PC-9 (cell line): ENCODE measurements at regions of chr12 and their contacts with region 1.

Region 1: DNA sequence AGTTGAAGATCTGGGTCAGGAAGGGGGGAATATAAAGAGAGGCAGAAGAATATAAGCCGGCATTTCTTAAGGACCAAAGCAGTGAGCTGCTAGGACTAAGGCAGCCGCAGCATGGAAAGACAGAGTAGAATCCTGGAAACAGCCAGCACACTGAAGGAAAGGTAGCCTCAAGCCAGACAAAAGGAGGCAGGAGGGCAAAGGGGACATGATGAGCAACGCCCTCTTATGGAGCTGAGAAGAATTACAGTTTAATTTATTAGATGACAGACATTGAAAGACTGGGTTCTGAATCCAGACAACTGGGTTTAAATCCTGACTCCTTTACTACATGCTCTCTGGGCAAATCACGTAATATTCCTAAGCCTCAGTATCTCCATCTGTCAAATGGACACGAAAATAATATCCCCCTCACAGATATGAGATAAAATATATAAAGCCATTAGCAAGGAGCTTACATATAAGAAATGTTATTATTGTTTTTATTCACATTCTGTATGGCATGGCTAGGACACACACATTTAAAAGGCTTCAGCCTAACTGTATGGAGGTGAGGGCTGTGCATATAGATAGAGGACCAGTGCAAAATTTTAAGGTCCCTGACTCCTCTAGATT is 8.1 kb upstream of the PCED1B start:
- DNase-seq: no peak
- H3K4me3 ChIP-seq: no peak overlapping the region
- H3K27ac ChIP-seq: no peak overlapping the region
- H3K4me1 ChIP-seq: peaks cover 10% of the 10 kb centered on the region; the same call in 1 of the 2 replicates
- H3K27me3 ChIP-seq: no peaks in the 10 kb centered on the region
- CTCF ChIP-seq: peak; percentile 70

Region 2: DNA sequence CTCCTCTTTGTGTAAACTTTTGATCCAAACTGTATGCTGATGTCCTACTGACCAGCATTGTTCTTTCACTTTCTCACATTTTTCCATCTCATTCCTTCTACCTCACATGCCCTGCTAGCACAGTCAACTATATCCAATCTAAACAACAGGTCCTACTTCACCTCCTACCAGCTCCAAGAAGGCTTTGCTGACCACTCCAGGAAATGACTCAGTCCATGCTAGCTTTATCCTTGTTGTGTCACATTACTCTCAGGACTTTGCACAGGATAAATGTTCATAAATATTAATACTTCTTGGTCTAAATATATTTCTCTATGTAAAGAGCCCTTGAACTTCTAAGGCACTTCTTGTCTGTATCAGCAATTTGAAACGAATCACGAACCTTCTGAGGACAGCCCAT is 56.9 kb before region 1 on chr12:
- CTCF ChIA-PET with region 1: no interaction called
- POLR2A ChIA-PET with region 1: interaction called, 13 read pairs
- intact Hi-C with region 1: no loop called
- DNase-seq: peak in 1 of 2 experiments; percentile 42
- H3K4me3 ChIP-seq: no peak overlapping the region
- H3K27ac ChIP-seq: peak overlapping the region; percentile 14; the same call in 1 of the 2 replicates
- H3K4me1 ChIP-seq: peaks cover 27% of the 10 kb centered on the region
- H3K27me3 ChIP-seq: no peaks in the 10 kb centered on the region
- CTCF ChIP-seq: no peak

Region 3: DNA sequence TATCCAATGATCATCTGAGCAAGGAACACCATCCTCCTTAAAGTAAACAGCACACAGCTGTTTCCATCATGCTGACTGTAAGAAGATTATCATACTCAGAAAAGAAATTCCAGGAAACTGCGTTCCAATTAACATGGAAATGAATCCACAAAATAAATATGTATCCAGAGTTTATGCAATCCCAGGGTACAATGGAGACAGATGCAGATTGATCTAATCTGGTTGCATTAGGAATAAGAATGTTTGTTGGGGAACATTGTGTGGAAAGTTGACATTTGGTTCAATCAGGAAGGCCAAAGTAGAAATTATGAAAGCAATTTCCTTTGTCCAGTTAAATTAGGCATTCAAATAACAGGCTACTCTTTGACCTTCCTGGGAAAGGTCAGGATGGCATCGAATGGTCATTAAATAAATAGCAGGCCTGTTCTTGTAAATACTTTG is 245.3 kb after region 1 on chr12:
- CTCF ChIA-PET with region 1: no interaction called
- POLR2A ChIA-PET with region 1: no interaction called
- intact Hi-C with region 1: no loop called
- DNase-seq: no peak
- H3K4me3 ChIP-seq: no peak overlapping the region
- H3K27ac ChIP-seq: no peak overlapping the region
- H3K4me1 ChIP-seq: no peaks in the 10 kb centered on the region
- H3K27me3 ChIP-seq: no peaks in the 10 kb centered on the region
- CTCF ChIP-seq: no peak

Region 4: GRCh38 chr12:47326956-47327355 is 255.6 kb after region 1 on chr12:
- CTCF ChIA-PET with region 1: interaction called, 14 read pairs
- POLR2A ChIA-PET with region 1: no interaction called
- intact Hi-C with region 1: no loop called
- DNase-seq: no peak
- H3K4me3 ChIP-seq: no peak overlapping the region
- H3K27ac ChIP-seq: no peak overlapping the region
- H3K4me1 ChIP-seq: peaks cover 3% of the 10 kb centered on the region; the same call in 1 of the 2 replicates
- H3K27me3 ChIP-seq: no peaks in the 10 kb centered on the region
- CTCF ChIP-seq: no peak

Region 5: GRCh38 chr12:47686645-47687240 is 615.4 kb after region 1 on chr12:
- CTCF ChIA-PET with region 1: interaction called, 11 read pairs
- POLR2A ChIA-PET with region 1: no interaction called
- intact Hi-C with region 1: no loop called
- DNase-seq: peak in 1 of 2 experiments; percentile 38
- H3K4me3 ChIP-seq: no peak overlapping the region
- H3K27ac ChIP-seq: no peak overlapping the region
- H3K4me1 ChIP-seq: no peaks in the 10 kb centered on the region
- H3K27me3 ChIP-seq: no peaks in the 10 kb centered on the region
- CTCF ChIP-seq: peak; percentile 80